CD4-positive, alpha-beta memory T cell (primary cell): ENCODE measurements at regions of chr7 and their contacts with region 1.

Region 1: DNA sequence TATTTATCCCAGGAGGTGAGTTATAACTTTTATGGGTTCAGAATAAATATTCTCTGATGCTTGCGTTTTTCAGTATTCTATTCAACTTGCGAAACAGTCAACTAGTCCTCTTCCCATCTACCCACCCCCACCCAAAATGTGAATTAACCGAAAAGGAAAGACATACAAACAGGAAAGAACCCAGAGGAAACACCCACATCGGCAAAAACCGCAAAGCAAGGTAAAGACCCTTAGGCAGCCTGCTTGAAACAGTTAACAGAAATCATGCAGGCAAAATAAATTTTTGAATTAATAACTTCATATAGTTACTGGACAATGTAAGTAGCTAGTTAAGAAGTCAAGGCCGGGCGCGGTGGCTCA is 5.4 kb downstream of the ZC3HAV1 start:
- DNase-seq: peak in 2 of 5 donors; percentile 43 to 64
- H3K4me3 ChIP-seq: peak overlapping the region; percentile 27 to 96
- H3K4me3 Mint-ChIP-seq: peak overlapping the region; percentile 95 to 98 (median 97)
- H3K27ac ChIP-seq: peak overlapping the region; percentile 42
- H3K27ac Mint-ChIP-seq: peak overlapping the region; percentile 84 to 96 (median 92)
- H3K4me1 ChIP-seq: peaks cover 29% of the 10 kb centered on the region
- H3K4me1 Mint-ChIP-seq: peaks cover 12 to 55% (median 23%) of the 10 kb centered on the region in 4 donors
- H3K27me3 ChIP-seq: no peaks in the 10 kb centered on the region
- H3K27me3 Mint-ChIP-seq: no peaks in the 10 kb centered on the region

Region 2: DNA sequence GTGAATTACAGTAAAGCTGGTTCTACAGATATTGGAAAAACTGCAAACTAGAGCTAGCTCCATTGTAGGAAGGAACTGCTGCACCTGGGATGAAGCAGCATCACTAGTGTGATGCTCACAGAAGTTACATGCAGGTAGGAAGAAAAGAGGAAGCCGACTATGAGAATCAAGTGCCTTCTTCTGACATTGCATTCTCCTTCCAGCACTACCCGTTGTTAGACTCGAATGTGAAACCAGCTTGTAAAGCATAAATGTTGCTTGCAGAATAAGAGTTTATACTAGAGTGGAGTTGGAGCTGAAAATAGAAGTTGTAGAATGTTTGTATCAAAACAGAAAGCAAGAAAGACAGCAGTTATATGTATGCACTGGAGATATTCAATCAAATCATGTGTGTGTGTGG is 594.1 kb before region 1 on chr7:
- CTCF ChIA-PET with region 1: no interaction called
- POLR2A ChIA-PET with region 1: no interaction called
- intact Hi-C with region 1: no loop called
- DNase-seq: no peak
- H3K4me3 ChIP-seq: no peak overlapping the region
- H3K4me3 Mint-ChIP-seq: no peak overlapping the region
- H3K27ac ChIP-seq: no peak overlapping the region
- H3K27ac Mint-ChIP-seq: peak overlapping the region in 1 of 7 donors; percentile 10
- H3K4me1 ChIP-seq: no peaks in the 10 kb centered on the region
- H3K4me1 Mint-ChIP-seq: peaks cover 20 to 39% (median 24%) of the 10 kb centered on the region in 4 donors
- H3K27me3 ChIP-seq: no peaks in the 10 kb centered on the region
- H3K27me3 Mint-ChIP-seq: no peaks in the 10 kb centered on the region

Region 3: GRCh38 chr7:139080905-139081304 is 23.2 kb before region 1 on chr7:
- CTCF ChIA-PET with region 1: interaction called, 12 read pairs
- POLR2A ChIA-PET with region 1: interaction called, 244 read pairs
- intact Hi-C with region 1: no loop called
- DNase-seq: no peak
- H3K4me3 ChIP-seq: no peak overlapping the region
- H3K4me3 Mint-ChIP-seq: peak overlapping the region; percentile 5 to 88 (median 68)
- H3K27ac ChIP-seq: peak overlapping the region; percentile 30
- H3K27ac Mint-ChIP-seq: peak overlapping the region; percentile 79 to 94 (median 88)
- H3K4me1 ChIP-seq: peaks cover 83% of the 10 kb centered on the region
- H3K4me1 Mint-ChIP-seq: peaks cover 62 to 97% (median 84%) of the 10 kb centered on the region in 4 donors
- H3K27me3 ChIP-seq: no peaks in the 10 kb centered on the region
- H3K27me3 Mint-ChIP-seq: no peaks in the 10 kb centered on the region

Region 4: DNA sequence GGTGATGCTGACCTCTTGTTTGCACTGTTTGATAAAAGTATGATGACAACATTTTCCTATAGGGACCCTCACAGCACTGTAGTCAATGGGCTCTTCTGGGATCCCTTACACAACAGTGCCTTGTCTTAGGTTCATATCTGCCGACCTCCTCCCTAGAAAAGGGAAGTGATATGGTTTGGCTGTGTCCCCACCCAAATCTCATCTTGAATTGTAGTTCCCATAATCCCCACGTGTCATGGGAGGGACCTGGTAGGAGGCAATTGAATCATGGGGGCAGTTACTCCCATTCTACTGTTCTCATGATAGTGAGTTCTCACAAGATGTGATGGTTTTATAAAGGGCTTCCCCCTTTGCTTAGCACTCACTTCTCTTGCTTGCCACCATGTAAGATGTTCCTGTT is 17.6 kb before region 1 on chr7:
- CTCF ChIA-PET with region 1: interaction called, 70 read pairs
- POLR2A ChIA-PET with region 1: interaction called, 248 read pairs
- intact Hi-C with region 1: no loop called
- DNase-seq: no peak
- H3K4me3 ChIP-seq: no peak overlapping the region
- H3K4me3 Mint-ChIP-seq: peak overlapping the region in 5 of 8 donors; percentile 13 to 87 (median 38)
- H3K27ac ChIP-seq: peak overlapping the region; percentile 6
- H3K27ac Mint-ChIP-seq: peak overlapping the region in 6 of 7 donors; percentile 67 to 92 (median 84)
- H3K4me1 ChIP-seq: peaks cover 95% of the 10 kb centered on the region
- H3K4me1 Mint-ChIP-seq: peaks cover 55 to 94% (median 79%) of the 10 kb centered on the region in 4 donors
- H3K27me3 ChIP-seq: no peaks in the 10 kb centered on the region
- H3K27me3 Mint-ChIP-seq: no peaks in the 10 kb centered on the region

Region 5: GRCh38 chr7:139118234-139118804 is 14.2 kb after region 1 on chr7:
- CTCF ChIA-PET with region 1: no interaction called
- POLR2A ChIA-PET with region 1: interaction called, 22 read pairs
- intact Hi-C with region 1: loop called (anchors 1 kb)
- DNase-seq: no peak
- H3K4me3 ChIP-seq: peak overlapping the region in 1 of 2 donors; percentile 8
- H3K4me3 Mint-ChIP-seq: peak overlapping the region; percentile 48 to 86 (median 78)
- H3K27ac ChIP-seq: peak overlapping the region; percentile 4
- H3K27ac Mint-ChIP-seq: peak overlapping the region; percentile 59 to 93 (median 89)
- H3K4me1 ChIP-seq: peaks cover 28% of the 10 kb centered on the region
- H3K4me1 Mint-ChIP-seq: peaks cover 25 to 52% (median 32%) of the 10 kb centered on the region in 4 donors
- H3K27me3 ChIP-seq: no peaks in the 10 kb centered on the region
- H3K27me3 Mint-ChIP-seq: peaks cover 0 to 3% of the 10 kb centered on the region in 2 donors

Region 6: GRCh38 chr7:139159900-139160675 is 56.0 kb after region 1 on chr7:
- CTCF ChIA-PET with region 1: no interaction called
- POLR2A ChIA-PET with region 1: no interaction called
- intact Hi-C with region 1: no loop called
- DNase-seq: no peak
- H3K4me3 ChIP-seq: no peak overlapping the region
- H3K4me3 Mint-ChIP-seq: no peak overlapping the region
- H3K27ac ChIP-seq: no peak overlapping the region
- H3K27ac Mint-ChIP-seq: peak overlapping the region in 1 of 7 donors; percentile 42
- H3K4me1 ChIP-seq: no peaks in the 10 kb centered on the region
- H3K4me1 Mint-ChIP-seq: no peaks in the 10 kb centered on the region
- H3K27me3 ChIP-seq: no peaks in the 10 kb centered on the region
- H3K27me3 Mint-ChIP-seq: no peaks in the 10 kb centered on the region

Region 7: GRCh38 chr7:139271718-139272628 is 167.9 kb after region 1 on chr7:
- CTCF ChIA-PET with region 1: no interaction called
- POLR2A ChIA-PET with region 1: no interaction called
- intact Hi-C with region 1: no loop called
- DNase-seq: no peak
- H3K4me3 ChIP-seq: no peak overlapping the region
- H3K4me3 Mint-ChIP-seq: no peak overlapping the region
- H3K27ac ChIP-seq: no peak overlapping the region
- H3K27ac Mint-ChIP-seq: no peak overlapping the region
- H3K4me1 ChIP-seq: no peaks in the 10 kb centered on the region
- H3K4me1 Mint-ChIP-seq: no peaks in the 10 kb centered on the region
- H3K27me3 ChIP-seq: no peaks in the 10 kb centered on the region
- H3K27me3 Mint-ChIP-seq: no peaks in the 10 kb centered on the region